Panc1 (cell line): ENCODE measurements at regions of chr6 and their contacts with region 1.

Region 1: DNA sequence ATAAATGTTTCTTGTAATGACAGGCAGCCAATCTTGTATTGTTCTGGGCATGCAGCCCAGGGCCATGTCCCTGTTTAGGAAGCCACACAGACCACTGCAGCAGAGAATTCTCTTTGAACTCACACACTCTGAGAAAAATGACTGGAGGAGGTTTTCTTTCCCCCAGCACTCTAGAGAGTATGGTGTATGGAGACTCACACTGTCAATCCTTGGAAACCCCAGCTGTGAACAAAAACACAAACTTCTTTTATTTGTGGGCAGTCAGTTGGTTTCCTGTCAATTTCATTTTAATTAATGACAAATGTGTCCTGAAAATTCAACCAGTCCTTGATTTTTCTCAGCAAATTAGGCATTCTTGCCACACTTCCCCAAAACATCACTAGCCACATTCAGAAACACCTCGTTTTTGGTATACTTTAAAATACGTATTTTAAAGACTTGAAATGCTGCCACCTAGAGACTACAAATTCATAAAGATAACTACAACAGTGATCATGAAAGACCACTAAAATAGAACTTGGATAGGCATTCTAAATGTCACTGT is 52.9 kb upstream of the UFL1 start:
- DNase-seq: no peak
- ATAC-seq: no peak
- H3K4me3 ChIP-seq: no peak overlapping the region
- H3K27ac ChIP-seq: no peak overlapping the region
- H3K4me1 ChIP-seq: no peaks in the 10 kb centered on the region; the same call in 1 of the 2 replicates
- H3K27me3 ChIP-seq: no peaks in the 10 kb centered on the region
- CTCF ChIP-seq: peak; percentile 37; the same call in 1 of the 2 replicates

Region 2: GRCh38 chr6:96340164-96340563 is 128.6 kb before region 1 on chr6:
- CTCF ChIA-PET with region 1: interaction called, 13 read pairs
- POLR2A ChIA-PET with region 1: no interaction called
- in situ Hi-C with region 1: no loop called
- intact Hi-C with region 1: no loop called
- DNase-seq: no peak
- ATAC-seq: no peak
- H3K4me3 ChIP-seq: no peak overlapping the region
- H3K27ac ChIP-seq: no peak overlapping the region
- H3K4me1 ChIP-seq: no peaks in the 10 kb centered on the region
- H3K27me3 ChIP-seq: no peaks in the 10 kb centered on the region
- CTCF ChIP-seq: no peak

Region 3: DNA sequence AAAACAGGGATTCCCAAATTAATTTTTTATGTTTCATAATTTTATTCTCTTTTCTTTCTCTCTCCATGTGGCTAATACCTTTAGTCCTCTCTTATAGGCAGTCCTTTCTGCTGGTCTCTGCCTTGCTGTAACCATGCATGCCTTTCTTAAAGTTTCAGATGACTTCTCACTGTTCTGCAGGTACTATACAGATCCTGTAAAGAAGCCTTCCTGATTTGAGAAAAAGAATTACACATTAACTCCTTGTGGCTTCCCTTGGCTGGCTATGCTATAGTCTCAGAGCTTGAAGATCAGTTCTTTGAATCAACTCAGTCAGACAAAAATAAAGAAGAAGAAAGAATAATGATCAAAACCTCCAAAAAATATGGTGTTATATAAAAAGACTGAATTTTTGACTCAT is 375.8 kb after region 1 on chr6:
- CTCF ChIA-PET with region 1: no interaction called
- POLR2A ChIA-PET with region 1: no interaction called
- in situ Hi-C with region 1: no loop called
- intact Hi-C with region 1: no loop called
- DNase-seq: no peak
- ATAC-seq: no peak
- H3K4me3 ChIP-seq: no peak overlapping the region
- H3K27ac ChIP-seq: no peak overlapping the region
- H3K4me1 ChIP-seq: no peaks in the 10 kb centered on the region
- H3K27me3 ChIP-seq: no peaks in the 10 kb centered on the region
- CTCF ChIP-seq: no peak